Vagina (tissue), 2 donors: ENCODE measurements at regions of chr1 and their contacts with region 1.

Region 1: GRCh38 chr1:191765273-191765672 is 393.0 kb upstream of the RGS18 start:
- DNase-seq: no peak
- H3K4me3 ChIP-seq: no peak overlapping the region
- H3K27ac ChIP-seq: no peak overlapping the region
- H3K4me1 ChIP-seq: no peaks in the 10 kb centered on the region
- H3K27me3 ChIP-seq: no peaks in the 10 kb centered on the region
- CTCF ChIP-seq: no peak
- POLR2A ChIP-seq: no peak

Region 2: DNA sequence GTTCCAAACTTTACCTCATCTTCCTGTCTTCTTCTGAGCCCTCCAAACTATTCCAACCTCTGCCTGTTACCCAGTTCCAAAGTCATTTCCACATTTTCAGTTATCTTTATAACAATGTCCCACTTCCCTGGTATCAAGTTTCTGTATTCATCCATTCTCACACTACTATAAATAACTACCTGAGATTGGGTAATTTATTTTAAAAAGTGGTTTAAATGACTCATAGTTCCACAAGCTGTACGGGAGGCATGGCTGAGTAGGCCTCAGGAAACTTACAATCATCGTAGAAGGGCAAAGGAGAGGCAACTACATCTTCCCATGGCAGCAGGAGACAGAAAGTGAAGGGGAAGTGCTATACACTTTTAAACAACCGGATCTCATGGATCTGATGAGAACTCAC is 35.5 kb before region 1 on chr1:
- intact Hi-C with region 1: loop called (anchors 2 kb)
- DNase-seq: no peak
- H3K4me3 ChIP-seq: no peak overlapping the region
- H3K27ac ChIP-seq: no peak overlapping the region
- H3K4me1 ChIP-seq: no peaks in the 10 kb centered on the region
- H3K27me3 ChIP-seq: no peaks in the 10 kb centered on the region
- CTCF ChIP-seq: no peak
- POLR2A ChIP-seq: no peak